Ovary (tissue), 10 donors: ENCODE measurements at regions of chr20 and their contacts with region 1.

Region 1: DNA sequence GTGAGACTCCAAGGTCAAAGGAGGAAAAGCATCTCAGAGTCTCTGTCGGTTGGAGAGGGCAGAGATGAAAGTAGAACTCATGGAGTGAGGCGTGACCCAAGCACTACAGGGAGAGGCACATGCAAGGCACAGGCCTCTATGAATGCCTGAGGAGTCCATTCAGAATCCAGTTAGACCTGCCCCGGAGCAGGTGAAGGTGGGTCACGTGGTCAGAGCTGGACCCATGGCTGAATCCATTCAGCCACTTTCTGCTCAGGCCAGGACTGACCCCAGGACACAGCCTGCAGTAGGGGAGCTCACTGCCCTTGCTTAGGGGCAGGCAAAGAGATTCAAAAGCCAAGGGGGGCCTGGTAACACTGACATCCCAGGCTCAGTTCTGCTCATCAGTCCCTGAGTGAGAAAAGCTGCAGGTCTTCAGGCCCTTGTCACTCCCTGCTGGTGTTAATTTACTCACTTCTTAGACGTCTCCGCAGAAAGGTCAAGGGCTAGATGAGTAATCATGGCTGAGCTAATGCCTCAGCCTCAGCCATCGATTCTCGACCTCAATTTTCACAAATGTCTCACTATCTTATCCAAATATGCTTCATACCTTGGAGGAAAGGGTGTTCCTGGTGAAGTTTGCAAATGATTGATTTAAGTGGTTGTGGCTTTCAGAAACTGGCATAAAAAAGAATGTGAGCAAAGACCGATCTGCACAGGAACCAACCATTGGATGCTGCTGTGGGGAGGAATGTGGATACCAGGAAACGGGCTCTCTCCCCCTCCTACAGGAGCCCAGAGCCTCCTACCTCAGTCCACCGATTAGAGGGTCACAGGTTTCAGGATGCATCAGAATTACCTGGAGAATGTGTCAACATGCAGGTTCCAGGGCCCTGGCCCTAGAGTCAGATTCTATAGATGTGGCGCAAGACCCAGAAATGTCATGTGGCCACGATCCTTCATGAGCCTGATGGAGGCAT is 584.4 kb downstream of the PTPRT start:
- DNase-seq: no peak
- H3K4me3 ChIP-seq: no peak overlapping the region
- H3K27ac ChIP-seq: no peak overlapping the region
- H3K4me1 ChIP-seq: no peaks in the 10 kb centered on the region
- H3K27me3 ChIP-seq: no peaks in the 10 kb centered on the region
- CTCF ChIP-seq: no peak
- EP300 ChIP-seq: no peak
- POLR2A ChIP-seq: no peak

Region 2: GRCh38 chr20:42100137-42100704 is 505.1 kb before region 1 on chr20:
- intact Hi-C with region 1: loop called in 1 of 4 experiments (anchors 5 kb)
- DNase-seq: no peak
- H3K4me3 ChIP-seq: no peak overlapping the region
- H3K27ac ChIP-seq: no peak overlapping the region
- H3K4me1 ChIP-seq: no peaks in the 10 kb centered on the region
- H3K27me3 ChIP-seq: no peaks in the 10 kb centered on the region
- CTCF ChIP-seq: no peak
- EP300 ChIP-seq: no peak
- POLR2A ChIP-seq: no peak